ENCODE measurements at regions of chr4 and their contacts with region 1.

Region 1: GRCh38 chr4:121800961-121801714 is at the start of gene EXOSC9:
- DNase-seq: peak; percentile 93 to 96 (median 93)
- H3K4me3 ChIP-seq: peak within 1 kb of the TSS; percentile 74 to 98
- H3K4me3 Mint-ChIP-seq: peak within 1 kb of the TSS; percentile 92 to 100 (median 96)
- H3K27ac ChIP-seq: peak within 1 kb of the TSS; percentile 88
- H3K27ac Mint-ChIP-seq: peak within 1 kb of the TSS; percentile 94 to 100 (median 99)
- H3K4me1 ChIP-seq: peaks cover 50% of the 10 kb centered on the region
- H3K4me1 Mint-ChIP-seq: peaks cover 29 to 52% (median 39%) of the 10 kb centered on the region in 4 donors
- H3K27me3 ChIP-seq: no peaks in the 10 kb centered on the region
- H3K27me3 Mint-ChIP-seq: peaks cover 0 to 3% of the 10 kb centered on the region in 2 donors
- total RNA-seq, gene EXOSC9: 43.0 to 45.4 TPM

Region 2: GRCh38 chr4:121182296-121182695 is 618.8 kb before region 1 on chr4:
- CTCF ChIA-PET with region 1: no interaction called
- POLR2A ChIA-PET with region 1: no interaction called
- intact Hi-C with region 1: loop called (anchors 5 kb)
- DNase-seq: peak; percentile 42 to 64 (median 57)
- H3K4me3 ChIP-seq: peak overlapping the region; percentile 43 to 62
- H3K4me3 Mint-ChIP-seq: peak overlapping the region; percentile 66 to 96 (median 86)
- H3K27ac ChIP-seq: peak overlapping the region; percentile 87
- H3K27ac Mint-ChIP-seq: peak overlapping the region; percentile 80 to 98 (median 92)
- H3K4me1 ChIP-seq: peaks cover 57% of the 10 kb centered on the region
- H3K4me1 Mint-ChIP-seq: peaks cover 49 to 71% (median 60%) of the 10 kb centered on the region in 4 donors
- H3K27me3 ChIP-seq: no peaks in the 10 kb centered on the region
- H3K27me3 Mint-ChIP-seq: no peaks in the 10 kb centered on the region

Region 3: DNA sequence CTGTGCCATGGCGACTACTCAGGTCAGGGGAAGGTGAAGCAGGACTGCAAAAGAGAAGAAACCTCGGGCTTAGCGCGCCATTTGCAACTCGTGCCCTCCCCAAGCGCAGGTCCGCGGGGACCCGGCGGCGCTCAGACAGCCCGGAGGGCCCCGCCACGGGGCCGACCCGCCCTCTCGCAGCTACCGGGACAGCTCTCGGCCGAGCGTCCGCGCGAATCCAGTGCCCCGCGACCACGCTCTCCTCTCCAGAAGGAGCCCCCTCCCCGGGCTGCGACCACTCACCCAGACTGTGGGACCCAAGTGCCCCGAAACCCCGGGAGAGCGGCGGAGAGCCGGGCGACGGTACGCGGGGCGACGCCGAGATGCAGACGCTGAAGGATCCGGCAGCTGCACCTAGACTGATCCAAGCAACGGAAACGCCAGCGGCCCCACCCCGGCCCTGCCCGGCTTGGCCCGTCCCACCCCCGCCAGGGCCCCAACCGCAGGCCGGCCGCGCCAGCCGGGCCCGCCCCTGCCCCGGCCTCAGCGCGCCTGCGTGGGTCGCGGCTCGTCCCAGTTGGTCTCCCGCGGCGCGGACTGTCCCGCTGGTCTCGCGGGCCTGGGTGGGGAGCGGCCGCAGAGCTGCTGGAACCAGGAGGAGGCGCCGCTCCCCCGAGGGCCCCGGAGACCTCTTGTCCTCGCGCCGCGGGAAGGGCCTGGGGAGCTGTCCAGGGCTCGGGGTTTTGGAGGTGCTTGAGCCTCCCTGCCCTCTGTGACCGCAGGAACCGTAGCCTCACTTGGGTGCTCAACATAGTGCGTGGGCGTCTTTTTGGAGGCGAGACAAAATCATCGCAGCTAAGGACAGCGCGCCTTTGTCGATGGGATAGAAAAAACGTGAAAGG is 104.3 kb before region 1 on chr4 and contains the start of gene ANXA5:
- CTCF ChIA-PET with region 1: interaction called, 3 read pairs
- POLR2A ChIA-PET with region 1: interaction called, 15 read pairs
- intact Hi-C with region 1: loop called (anchors 1 kb)
- DNase-seq: peak; percentile 62 to 72 (median 70)
- H3K4me3 ChIP-seq: peak within 1 kb of the TSS; percentile 78 to 80
- H3K4me3 Mint-ChIP-seq: peak within 1 kb of the TSS; percentile 97 to 100 (median 99)
- H3K27ac ChIP-seq: peak within 1 kb of the TSS; percentile 55
- H3K27ac Mint-ChIP-seq: peak within 1 kb of the TSS; percentile 89 to 99 (median 96)
- H3K4me1 ChIP-seq: peaks cover 21% of the 10 kb centered on the region
- H3K4me1 Mint-ChIP-seq: peaks cover 29 to 37% (median 31%) of the 10 kb centered on the region in 4 donors
- H3K27me3 ChIP-seq: no peaks in the 10 kb centered on the region
- H3K27me3 Mint-ChIP-seq: peaks cover 0 to 1% of the 10 kb centered on the region in 2 donors
- total RNA-seq, gene ANXA5: 70.7 to 77.0 TPM

Region 4: DNA sequence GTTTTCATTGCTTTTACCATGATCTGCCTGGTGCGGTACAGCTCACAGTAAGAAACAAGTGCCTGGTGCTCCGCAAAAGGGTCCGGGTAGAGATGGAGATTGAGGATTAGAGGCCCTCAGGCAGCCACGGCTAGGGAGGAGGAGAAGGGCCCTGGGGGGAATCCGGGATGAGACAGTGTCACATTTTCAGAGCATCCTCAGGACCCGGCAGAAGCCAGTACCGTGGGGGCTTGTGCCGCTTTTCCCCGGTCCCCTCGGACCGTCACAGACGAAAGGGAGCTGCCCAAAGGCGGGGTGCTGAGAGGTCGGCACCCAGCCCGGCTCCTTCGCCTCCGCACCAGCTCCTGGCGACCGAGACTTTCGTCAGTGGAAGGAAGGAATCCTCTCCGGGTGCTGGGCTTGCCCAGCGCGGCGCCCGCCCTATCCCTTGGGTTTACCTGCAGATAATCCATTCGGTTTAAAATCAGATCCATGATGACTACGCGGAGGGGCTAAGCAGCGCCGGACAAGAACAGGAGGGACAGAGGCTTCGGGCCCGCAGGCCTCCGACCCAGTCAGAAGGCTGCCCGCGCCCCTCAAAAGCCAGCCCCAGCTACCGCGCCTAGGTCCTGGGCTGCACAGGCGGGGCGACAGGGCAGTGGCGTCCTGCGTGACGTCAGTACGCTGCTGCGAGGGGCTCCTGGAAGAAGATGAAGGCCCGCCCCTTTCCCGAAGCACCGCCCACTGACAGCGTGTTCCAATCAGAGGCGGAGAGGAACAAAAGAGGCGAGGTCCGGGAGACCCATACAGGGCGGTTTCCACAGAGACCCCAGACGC is 68.9 kb after region 1 on chr4 and contains the start of gene BBS7:
- CTCF ChIA-PET with region 1: no interaction called
- POLR2A ChIA-PET with region 1: interaction called, 9 read pairs
- intact Hi-C with region 1: loop called (anchors 2 kb)
- DNase-seq: peak; percentile 88 to 95 (median 89)
- H3K4me3 ChIP-seq: peak within 1 kb of the TSS; percentile 92 to 97
- H3K4me3 Mint-ChIP-seq: peak within 1 kb of the TSS; percentile 91 to 98 (median 96)
- H3K27ac ChIP-seq: peak within 1 kb of the TSS; percentile 81
- H3K27ac Mint-ChIP-seq: peak within 1 kb of the TSS; percentile 79 to 98 (median 94)
- H3K4me1 ChIP-seq: peaks cover 19% of the 10 kb centered on the region
- H3K4me1 Mint-ChIP-seq: peaks cover 9 to 30% (median 16%) of the 10 kb centered on the region in 4 donors
- H3K27me3 ChIP-seq: peaks cover 6% of the 10 kb centered on the region
- H3K27me3 Mint-ChIP-seq: peaks cover 4 to 6% of the 10 kb centered on the region in 2 donors
- total RNA-seq, gene BBS7: 8.8 to 10.1 TPM

Measured in CD4-positive, alpha-beta memory T cell (primary cell).